Breast epithelium (tissue), 4 donors: ENCODE measurements at regions of chr7 and their contacts with region 1.

Region 1: GRCh38 chr7:154640266-154640865 is 362.6 kb downstream of the PAXIP1 start:
- DNase-seq: no peak
- H3K4me3 ChIP-seq: no peak overlapping the region
- H3K27ac ChIP-seq: no peak overlapping the region
- H3K4me1 ChIP-seq: no peaks in the 10 kb centered on the region
- H3K27me3 ChIP-seq: no peaks in the 10 kb centered on the region
- CTCF ChIP-seq: no peak
- POLR2A ChIP-seq: no peak

Region 2: DNA sequence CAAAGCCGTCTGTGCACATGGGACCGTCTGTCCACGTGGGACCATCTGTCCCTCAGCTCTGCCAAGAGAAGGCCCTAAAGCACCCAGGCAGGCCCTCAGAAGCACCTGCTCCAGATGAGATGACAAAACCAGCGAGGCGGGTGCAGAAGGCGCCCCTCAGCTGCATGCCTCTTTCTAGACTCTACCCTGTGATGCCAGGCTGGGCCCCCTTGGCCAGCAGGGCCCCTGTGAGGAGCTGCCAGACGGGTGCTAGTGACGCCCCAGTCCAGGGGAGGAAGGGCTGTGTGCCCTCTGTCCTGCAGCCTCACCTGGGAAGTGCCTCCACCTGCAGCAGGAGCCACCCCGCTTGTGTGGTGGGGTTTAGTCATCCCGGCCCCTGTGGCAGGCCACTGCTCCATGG is 1481.1 kb after region 1 on chr7:
- intact Hi-C with region 1: loop called (anchors 5 kb)
- DNase-seq: no peak
- H3K4me3 ChIP-seq: no peak overlapping the region
- H3K27ac ChIP-seq: no peak overlapping the region
- H3K4me1 ChIP-seq: no peaks in the 10 kb centered on the region
- H3K27me3 ChIP-seq: peaks cover 0 to 5% of the 10 kb centered on the region in 2 donors
- CTCF ChIP-seq: no peak
- POLR2A ChIP-seq: no peak